CD4-positive, alpha-beta T cell (primary cell): ENCODE measurements at regions of chr11 and their contacts with region 1.

Region 1: GRCh38 chr11:17610085-17610894 is 63.2 kb downstream of the OTOG start:
- DNase-seq: no peak
- ATAC-seq: no peak
- H3K4me3 ChIP-seq: no peak overlapping the region
- H3K4me3 Mint-ChIP-seq: no peak overlapping the region
- H3K27ac ChIP-seq: no peak overlapping the region
- H3K27ac Mint-ChIP-seq: no peak overlapping the region
- H3K4me1 ChIP-seq: no peaks in the 10 kb centered on the region
- H3K4me1 Mint-ChIP-seq: no peaks in the 10 kb centered on the region
- H3K27me3 ChIP-seq: peaks cover 0 to 2% of the 10 kb centered on the region in 2 experiments
- H3K27me3 Mint-ChIP-seq: peaks cover 14% of the 10 kb centered on the region
- CTCF ChIP-seq: no peak

Region 2: DNA sequence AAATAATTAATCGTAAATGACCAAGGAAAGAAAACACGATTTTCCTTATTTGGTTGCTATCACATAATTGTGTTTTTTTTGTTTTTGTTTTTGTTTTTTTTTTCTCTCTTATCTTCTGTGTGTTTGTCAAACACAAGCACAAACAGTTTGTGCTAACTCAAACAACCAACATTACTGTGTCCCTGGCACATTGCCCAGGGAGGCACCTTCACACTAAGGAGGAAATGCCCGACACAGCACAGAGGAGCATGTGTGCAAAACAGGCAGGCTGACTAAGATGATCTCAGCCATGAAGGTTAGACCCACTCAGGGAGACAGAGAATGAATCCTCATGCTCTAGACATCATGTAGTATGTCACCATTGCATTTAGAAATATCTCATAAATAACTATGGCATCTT is 1384.0 kb before region 1 on chr11:
- CTCF ChIA-PET with region 1: no interaction called
- POLR2A ChIA-PET with region 1: no interaction called
- intact Hi-C with region 1: no loop called
- DNase-seq: no peak
- ATAC-seq: no peak
- H3K4me3 ChIP-seq: no peak overlapping the region
- H3K4me3 Mint-ChIP-seq: no peak overlapping the region
- H3K27ac ChIP-seq: no peak overlapping the region
- H3K27ac Mint-ChIP-seq: no peak overlapping the region
- H3K4me1 ChIP-seq: no peaks in the 10 kb centered on the region
- H3K4me1 Mint-ChIP-seq: no peaks in the 10 kb centered on the region
- H3K27me3 ChIP-seq: no peaks in the 10 kb centered on the region
- H3K27me3 Mint-ChIP-seq: no peaks in the 10 kb centered on the region
- CTCF ChIP-seq: no peak

Region 3: GRCh38 chr11:16891964-16892363 is 718.3 kb before region 1 on chr11:
- CTCF ChIA-PET with region 1: no interaction called
- POLR2A ChIA-PET with region 1: no interaction called
- intact Hi-C with region 1: no loop called
- DNase-seq: no peak
- ATAC-seq: no peak
- H3K4me3 ChIP-seq: no peak overlapping the region
- H3K4me3 Mint-ChIP-seq: no peak overlapping the region
- H3K27ac ChIP-seq: no peak overlapping the region
- H3K27ac Mint-ChIP-seq: no peak overlapping the region
- H3K4me1 ChIP-seq: no peaks in the 10 kb centered on the region
- H3K4me1 Mint-ChIP-seq: no peaks in the 10 kb centered on the region
- H3K27me3 ChIP-seq: no peaks in the 10 kb centered on the region
- H3K27me3 Mint-ChIP-seq: no peaks in the 10 kb centered on the region
- CTCF ChIP-seq: no peak

Region 4: GRCh38 chr11:17550450-17551346 is 59.6 kb before region 1 on chr11:
- CTCF ChIA-PET with region 1: no interaction called
- POLR2A ChIA-PET with region 1: no interaction called
- intact Hi-C with region 1: loop called in 1 of 2 experiments (anchors 10 kb)
- DNase-seq: no peak
- ATAC-seq: no peak
- H3K4me3 ChIP-seq: no peak overlapping the region
- H3K4me3 Mint-ChIP-seq: no peak overlapping the region
- H3K27ac ChIP-seq: no peak overlapping the region
- H3K27ac Mint-ChIP-seq: no peak overlapping the region
- H3K4me1 ChIP-seq: no peaks in the 10 kb centered on the region
- H3K4me1 Mint-ChIP-seq: no peaks in the 10 kb centered on the region
- H3K27me3 ChIP-seq: peaks cover 6 to 16% of the 10 kb centered on the region in 2 experiments
- H3K27me3 Mint-ChIP-seq: peaks cover 39% of the 10 kb centered on the region
- CTCF ChIP-seq: no peak

Region 5: DNA sequence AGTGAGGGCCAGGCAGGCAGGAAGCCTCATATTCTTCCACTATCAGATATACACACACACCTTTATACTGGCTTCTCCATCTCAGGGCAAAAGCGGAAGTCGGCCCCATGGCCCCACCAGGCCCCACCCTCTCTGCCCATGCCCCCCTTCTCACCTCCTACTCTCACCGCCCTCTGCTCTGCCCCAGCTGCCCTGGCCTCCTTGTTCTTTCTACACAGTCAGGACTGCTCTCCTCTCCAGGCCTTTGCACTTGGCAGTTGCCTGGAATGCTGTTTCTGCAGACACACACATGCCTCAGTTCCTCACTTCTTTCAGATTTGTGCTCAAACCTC is 38.0 kb before region 1 on chr11:
- CTCF ChIA-PET with region 1: no interaction called
- POLR2A ChIA-PET with region 1: no interaction called
- intact Hi-C with region 1: no loop called
- DNase-seq: no peak
- ATAC-seq: no peak
- H3K4me3 ChIP-seq: no peak overlapping the region
- H3K4me3 Mint-ChIP-seq: no peak overlapping the region
- H3K27ac ChIP-seq: no peak overlapping the region
- H3K27ac Mint-ChIP-seq: no peak overlapping the region
- H3K4me1 ChIP-seq: no peaks in the 10 kb centered on the region
- H3K4me1 Mint-ChIP-seq: no peaks in the 10 kb centered on the region
- H3K27me3 ChIP-seq: peaks cover 0 to 4% of the 10 kb centered on the region in 2 experiments
- H3K27me3 Mint-ChIP-seq: peaks cover 9% of the 10 kb centered on the region
- CTCF ChIP-seq: no peak

Region 6: DNA sequence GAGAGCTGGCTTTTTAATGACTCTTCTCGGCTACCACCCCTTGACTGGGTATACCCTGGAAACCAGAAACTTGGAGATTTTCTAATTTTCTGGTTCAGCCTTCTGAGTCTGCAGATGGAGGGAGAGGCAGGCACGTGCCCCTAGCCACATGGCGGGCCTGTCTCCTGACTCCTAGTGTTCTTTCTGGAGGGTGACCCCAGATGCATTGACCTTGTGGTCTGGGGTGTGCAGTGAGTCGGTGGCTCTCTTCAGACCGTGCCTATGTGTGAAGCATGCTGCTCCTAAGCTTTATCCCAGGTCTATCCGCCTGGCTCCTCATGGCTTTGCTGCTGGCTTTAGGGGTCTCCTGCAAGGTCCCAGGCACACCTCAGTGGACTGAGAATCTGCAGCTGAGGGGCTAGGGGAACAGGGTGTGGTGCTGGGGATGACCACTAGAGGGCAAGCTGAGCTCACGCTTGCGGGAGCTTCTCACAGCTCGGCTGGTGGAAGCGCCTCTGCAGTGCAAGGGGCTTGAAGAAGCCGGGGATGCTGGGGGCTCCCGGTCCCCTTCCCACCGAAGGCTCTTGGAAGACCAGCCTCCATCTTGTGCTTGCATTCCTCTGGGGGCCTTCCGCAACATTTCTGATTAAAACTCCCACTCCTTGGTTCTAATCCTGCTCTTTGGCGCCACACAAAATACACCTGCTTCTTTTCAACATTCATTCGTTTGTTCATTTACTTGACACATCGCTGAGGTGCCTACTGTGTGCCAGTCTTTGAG is 11.4 kb before region 1 on chr11:
- CTCF ChIA-PET with region 1: no interaction called
- POLR2A ChIA-PET with region 1: no interaction called
- intact Hi-C with region 1: no loop called
- DNase-seq: peak; percentile 27 to 72 (median 56)
- ATAC-seq: peak; percentile 56
- H3K4me3 ChIP-seq: no peak overlapping the region
- H3K4me3 Mint-ChIP-seq: no peak overlapping the region
- H3K27ac ChIP-seq: no peak overlapping the region
- H3K27ac Mint-ChIP-seq: no peak overlapping the region
- H3K4me1 ChIP-seq: no peaks in the 10 kb centered on the region
- H3K4me1 Mint-ChIP-seq: no peaks in the 10 kb centered on the region
- H3K27me3 ChIP-seq: peaks cover 0 to 4% of the 10 kb centered on the region in 2 experiments
- H3K27me3 Mint-ChIP-seq: peaks cover 6% of the 10 kb centered on the region
- CTCF ChIP-seq: peak; percentile 89